Heart right ventricle (tissue), 16 donors: ENCODE measurements at regions of chr11 and their contacts with region 1.

Region 1: GRCh38 chr11:66222358-66223149 is 45.9 kb upstream of the RAB1B start:
- DNase-seq: peak; percentile 81 to 88
- ATAC-seq: peak; percentile 82 to 92 (median 88)
- H3K4me3 ChIP-seq: no peak overlapping the region
- H3K27ac ChIP-seq: peak overlapping the region in 1 of 10 donors; percentile 40
- H3K4me1 ChIP-seq: peaks cover 0 to 10% (median 0%) of the 10 kb centered on the region in 9 donors
- H3K27me3 ChIP-seq: no peaks in the 10 kb centered on the region
- CTCF ChIP-seq: peak; percentile 98 to 100 (median 99)

Region 2: GRCh38 chr11:66258473-66258893 is 35.9 kb after region 1 on chr11:
- intact Hi-C with region 1: loop called in 5 of 10 experiments (anchors 1 to 2 kb)
- DNase-seq: no peak
- ATAC-seq: no peak
- H3K4me3 ChIP-seq: peak overlapping the region; percentile 79 to 100 (median 95)
- H3K27ac ChIP-seq: peak overlapping the region in 8 of 10 donors; percentile 80 to 90 (median 86)
- H3K4me1 ChIP-seq: peaks cover 0 to 19% (median 13%) of the 10 kb centered on the region in 9 donors
- H3K27me3 ChIP-seq: peaks cover 0 to 17% (median 0%) of the 10 kb centered on the region in 7 donors
- CTCF ChIP-seq: peak in 5 of 9 donors; percentile 9 to 43 (median 22)

Region 3: DNA sequence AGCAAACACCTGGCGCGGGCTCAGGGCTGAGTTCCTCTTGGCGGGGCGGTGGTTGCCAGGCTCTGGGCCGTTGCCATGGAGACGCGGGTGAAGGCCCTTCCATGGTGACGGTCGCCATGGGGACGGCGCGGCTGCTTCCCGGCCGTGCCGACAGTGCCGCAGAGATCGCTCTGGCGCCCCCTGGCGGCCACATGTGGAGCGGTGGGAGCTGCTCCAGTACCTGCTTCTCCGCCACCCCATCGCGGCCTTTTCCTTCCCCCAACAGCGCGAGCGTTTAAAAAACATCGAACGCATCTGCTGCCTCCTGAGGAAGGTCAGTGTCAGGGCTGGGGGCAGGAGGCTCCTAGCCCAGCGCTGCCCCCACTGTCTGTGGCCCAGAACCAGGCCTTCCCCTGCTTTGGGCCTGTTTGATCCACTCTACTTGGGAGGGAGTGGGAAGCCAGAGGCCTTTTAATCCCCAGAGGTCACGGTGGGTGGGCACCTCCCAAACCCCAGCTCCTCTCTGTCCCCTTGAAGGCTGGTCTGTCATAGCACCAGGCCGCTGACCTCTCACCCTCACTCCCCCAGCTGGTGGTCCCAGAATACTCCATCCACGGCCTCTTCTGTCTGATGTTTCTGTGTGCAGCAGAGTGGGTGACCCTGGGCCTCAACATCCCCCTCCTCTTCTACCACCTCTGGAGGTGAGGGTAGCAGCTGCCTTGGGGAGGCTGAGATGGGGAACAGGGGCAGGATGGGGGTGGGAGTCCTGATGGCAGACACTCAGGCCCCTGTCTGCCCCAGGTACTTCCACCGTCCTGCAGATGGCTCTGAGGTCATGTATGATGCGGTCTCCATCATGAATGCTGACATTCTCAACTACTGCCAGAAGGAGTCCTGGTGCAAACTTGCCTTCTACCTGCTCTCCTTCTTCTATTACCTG is 60.2 kb after region 1 on chr11:
- intact Hi-C with region 1: loop called in 8 of 10 experiments (anchors 1 to 10 kb)
- DNase-seq: peak; percentile 96 to 98
- ATAC-seq: peak; percentile 80 to 94 (median 88)
- H3K4me3 ChIP-seq: no peak overlapping the region
- H3K27ac ChIP-seq: peak overlapping the region in 2 of 10 donors; percentile 0 to 21
- H3K4me1 ChIP-seq: peaks cover 5 to 56% (median 28%) of the 10 kb centered on the region in 9 donors
- H3K27me3 ChIP-seq: peaks cover 0 to 6% (median 0%) of the 10 kb centered on the region in 7 donors
- CTCF ChIP-seq: peak; percentile 83 to 99 (median 99)

Region 4: DNA sequence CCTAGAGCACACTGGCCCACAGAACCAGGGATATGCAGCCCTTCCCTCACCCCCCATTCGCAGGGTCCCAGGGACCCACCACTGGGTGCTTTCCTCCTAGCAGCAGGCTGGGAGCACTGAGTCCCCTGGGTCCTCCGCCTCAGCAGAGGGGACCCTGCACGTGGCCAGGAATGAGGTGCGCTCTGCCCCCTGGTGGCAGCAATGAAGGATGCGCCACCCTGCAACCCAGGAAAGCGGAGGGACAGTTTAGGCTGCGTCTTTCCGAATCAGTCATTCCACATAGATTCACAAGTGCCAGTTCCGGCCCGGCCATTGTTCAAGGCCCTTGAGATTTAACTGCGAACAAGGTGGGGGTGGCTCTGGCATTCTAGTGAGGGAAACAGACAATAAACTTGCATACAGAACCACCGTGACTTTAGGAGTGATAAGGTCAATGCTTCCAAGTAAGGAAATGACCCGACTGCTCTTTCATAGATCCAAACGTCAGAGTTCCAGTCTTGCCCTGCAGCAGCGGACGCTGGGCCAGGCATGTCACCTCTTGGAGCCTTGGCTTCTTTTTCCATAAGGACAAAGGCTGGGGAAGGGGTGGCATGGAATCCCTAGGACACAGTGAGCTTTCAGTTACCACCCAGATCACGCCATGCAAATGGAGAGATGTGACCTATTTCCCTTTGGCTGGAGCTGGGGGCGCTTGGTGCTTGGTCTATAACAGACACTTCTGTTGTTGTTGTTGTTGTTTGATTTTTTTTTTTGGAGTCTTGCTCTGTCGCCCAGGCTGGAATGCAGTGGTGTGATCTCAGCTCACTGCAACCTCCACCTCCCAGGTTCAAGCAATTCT is 106.0 kb after region 1 on chr11:
- intact Hi-C with region 1: loop called in 1 of 10 experiments (anchors 5 kb)
- DNase-seq: peak; percentile 78 to 83
- ATAC-seq: peak; percentile 66 to 87 (median 79)
- H3K4me3 ChIP-seq: peak overlapping the region in 4 of 10 donors; percentile 14 to 34 (median 19)
- H3K27ac ChIP-seq: peak overlapping the region in 6 of 10 donors; percentile 74 to 89 (median 77)
- H3K4me1 ChIP-seq: peaks cover 21 to 40% (median 30%) of the 10 kb centered on the region in 9 donors
- H3K27me3 ChIP-seq: no peaks in the 10 kb centered on the region
- CTCF ChIP-seq: peak; percentile 91 to 98 (median 96)